HepG2 (cell line): ENCODE measurements at regions of chr2 and their contacts with region 1.

Region 1: GRCh38 chr2:202375609-202376408 is at the start of gene BMPR2:
- DNase-seq: peak; percentile 83
- ATAC-seq: peak; percentile 84
- H3K4me3 ChIP-seq: peak within 1 kb of the TSS; percentile 88 to 99 (median 95)
- H3K27ac ChIP-seq: peak within 1 kb of the TSS; percentile 85
- H3K4me1 ChIP-seq: peaks cover 40% of the 10 kb centered on the region
- H3K27me3 ChIP-seq: no peaks in the 10 kb centered on the region; a peak in 1 of 5 replicates
- CTCF ChIP-seq: no peak
- EP300 ChIP-seq: peak; percentile 10 to 45; a peak in 2 of 4 replicates
- POLR2A ChIP-seq: peak; percentile 95 to 98
- RAD21 ChIP-seq: no peak
- total RNA-seq, gene BMPR2: 5.5 and 7.4 TPM in 2 replicates

Region 2: DNA sequence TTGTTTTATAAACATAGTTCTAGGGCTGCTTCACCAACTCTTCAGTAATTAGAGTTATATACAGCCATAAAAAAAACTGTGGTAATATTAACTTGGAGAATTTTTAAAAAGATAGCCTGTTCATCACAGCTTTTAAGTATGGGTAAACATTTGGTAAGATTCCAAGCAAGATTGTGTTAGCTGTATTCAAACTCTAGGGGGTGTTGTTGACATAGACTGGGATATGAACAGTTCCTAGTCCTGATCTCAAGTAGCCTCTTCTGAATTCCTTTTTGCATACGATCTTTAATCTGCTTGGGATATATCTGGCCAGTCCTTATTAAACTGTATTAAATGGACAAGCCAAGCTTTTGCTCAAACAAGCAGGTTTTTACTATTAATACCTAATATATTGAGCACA is 96.9 kb before region 1 on chr2:
- CTCF ChIA-PET with region 1: no interaction called
- POLR2A ChIA-PET with region 1: no interaction called
- in situ Hi-C with region 1: no loop called
- intact Hi-C with region 1: loop called (anchors 5 kb)
- DNase-seq: peak; percentile 48
- ATAC-seq: peak; percentile 65
- H3K4me3 ChIP-seq: no peak overlapping the region
- H3K27ac ChIP-seq: no peak overlapping the region
- H3K4me1 ChIP-seq: peaks cover 43% of the 10 kb centered on the region
- H3K27me3 ChIP-seq: no peaks in the 10 kb centered on the region
- CTCF ChIP-seq: peak; percentile 65
- EP300 ChIP-seq: no peak
- POLR2A ChIP-seq: 0 out of 4 replicates have a peak, but pooled peaks of 1 of the 2 experiments have one; percentile 12
- RAD21 ChIP-seq: no peak

Region 3: DNA sequence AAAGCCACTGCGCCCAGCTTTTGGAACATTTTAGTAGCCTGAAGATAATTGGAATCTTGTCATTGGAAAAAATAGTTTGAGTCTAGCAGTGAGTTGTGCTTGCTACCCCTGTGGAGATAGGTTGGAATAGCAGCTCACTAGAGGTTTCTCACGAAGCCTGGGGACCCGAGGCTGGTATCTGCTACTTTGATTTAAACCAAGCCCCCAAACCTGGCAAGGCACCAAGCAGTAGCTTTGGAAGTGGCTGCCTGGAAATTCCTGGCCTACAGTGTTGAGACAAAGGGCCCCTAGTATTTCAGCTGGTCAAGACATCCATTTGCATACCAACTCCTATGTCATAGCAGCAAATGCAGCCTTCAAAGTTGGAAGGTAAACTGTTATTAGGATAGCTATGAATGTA is 68.1 kb before region 1 on chr2:
- CTCF ChIA-PET with region 1: no interaction called
- POLR2A ChIA-PET with region 1: no interaction called
- in situ Hi-C with region 1: no loop called
- intact Hi-C with region 1: loop called (anchors 5 kb)
- DNase-seq: no peak
- ATAC-seq: peak; percentile 57
- H3K4me3 ChIP-seq: no peak overlapping the region
- H3K27ac ChIP-seq: no peak overlapping the region
- H3K4me1 ChIP-seq: no peaks in the 10 kb centered on the region
- H3K27me3 ChIP-seq: no peaks in the 10 kb centered on the region
- CTCF ChIP-seq: no peak
- EP300 ChIP-seq: no peak
- POLR2A ChIP-seq: peak in 1 of 2 experiments; percentile 40; a peak in 2 of 4 replicates
- RAD21 ChIP-seq: no peak

Region 4: DNA sequence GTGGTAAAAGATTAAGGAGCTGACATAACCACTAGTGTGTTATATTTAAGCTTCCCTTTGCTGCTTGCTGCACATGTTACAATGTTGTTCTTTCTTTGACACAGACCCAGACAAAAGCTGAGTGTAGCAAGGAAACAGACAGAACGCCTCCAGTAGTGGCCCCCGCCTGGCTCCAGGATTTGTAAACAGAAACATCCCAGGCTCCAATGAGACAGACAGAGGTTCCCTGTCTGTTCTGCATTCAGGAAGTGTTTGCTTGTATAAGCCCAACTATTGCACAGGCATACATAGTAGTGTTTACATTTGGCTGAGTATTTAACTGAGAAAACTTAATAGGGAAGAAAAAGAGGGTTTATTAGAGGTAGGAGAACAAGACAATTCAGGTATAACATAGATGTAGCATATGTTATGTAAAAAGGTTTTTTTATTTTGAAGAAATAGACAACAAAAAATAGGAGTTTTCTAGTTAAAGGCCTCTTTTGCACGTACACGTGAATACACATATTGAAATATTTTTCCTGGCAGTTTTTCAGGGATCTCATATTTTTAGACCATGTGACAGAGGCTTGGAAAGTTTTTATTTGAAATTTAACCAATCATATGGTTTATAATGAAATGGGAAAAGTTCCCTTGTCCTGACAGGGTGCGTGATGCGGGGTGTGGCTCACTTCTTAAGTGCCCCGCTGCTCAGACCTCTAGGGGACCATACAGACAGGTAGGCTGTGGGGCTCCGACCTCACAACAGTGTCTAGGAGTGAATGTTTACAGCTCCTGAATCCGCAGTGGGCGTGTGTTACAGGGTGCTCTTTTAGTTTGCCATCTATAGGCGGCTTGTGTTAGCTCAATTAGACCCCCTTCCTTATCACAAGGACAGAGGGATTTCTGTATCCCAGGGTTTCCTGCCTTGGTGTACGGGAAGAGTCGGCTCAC is 118.8 kb after region 1 on chr2:
- CTCF ChIA-PET with region 1: no interaction called
- POLR2A ChIA-PET with region 1: no interaction called
- in situ Hi-C with region 1: no loop called
- intact Hi-C with region 1: loop called (anchors 1 kb)
- DNase-seq: peak; percentile 98
- ATAC-seq: peak; percentile 100
- H3K4me3 ChIP-seq: no peak overlapping the region; a peak in 1 of 6 replicates
- H3K27ac ChIP-seq: peak overlapping the region; percentile 35
- H3K4me1 ChIP-seq: peaks cover 20% of the 10 kb centered on the region
- H3K27me3 ChIP-seq: no peaks in the 10 kb centered on the region
- CTCF ChIP-seq: no peak
- EP300 ChIP-seq: peak; percentile 26 to 86; a peak in 3 of 4 replicates
- POLR2A ChIP-seq: no peak
- RAD21 ChIP-seq: no peak